ENCODE measurements at regions of chr1 and their contacts with region 1.

Region 1: DNA sequence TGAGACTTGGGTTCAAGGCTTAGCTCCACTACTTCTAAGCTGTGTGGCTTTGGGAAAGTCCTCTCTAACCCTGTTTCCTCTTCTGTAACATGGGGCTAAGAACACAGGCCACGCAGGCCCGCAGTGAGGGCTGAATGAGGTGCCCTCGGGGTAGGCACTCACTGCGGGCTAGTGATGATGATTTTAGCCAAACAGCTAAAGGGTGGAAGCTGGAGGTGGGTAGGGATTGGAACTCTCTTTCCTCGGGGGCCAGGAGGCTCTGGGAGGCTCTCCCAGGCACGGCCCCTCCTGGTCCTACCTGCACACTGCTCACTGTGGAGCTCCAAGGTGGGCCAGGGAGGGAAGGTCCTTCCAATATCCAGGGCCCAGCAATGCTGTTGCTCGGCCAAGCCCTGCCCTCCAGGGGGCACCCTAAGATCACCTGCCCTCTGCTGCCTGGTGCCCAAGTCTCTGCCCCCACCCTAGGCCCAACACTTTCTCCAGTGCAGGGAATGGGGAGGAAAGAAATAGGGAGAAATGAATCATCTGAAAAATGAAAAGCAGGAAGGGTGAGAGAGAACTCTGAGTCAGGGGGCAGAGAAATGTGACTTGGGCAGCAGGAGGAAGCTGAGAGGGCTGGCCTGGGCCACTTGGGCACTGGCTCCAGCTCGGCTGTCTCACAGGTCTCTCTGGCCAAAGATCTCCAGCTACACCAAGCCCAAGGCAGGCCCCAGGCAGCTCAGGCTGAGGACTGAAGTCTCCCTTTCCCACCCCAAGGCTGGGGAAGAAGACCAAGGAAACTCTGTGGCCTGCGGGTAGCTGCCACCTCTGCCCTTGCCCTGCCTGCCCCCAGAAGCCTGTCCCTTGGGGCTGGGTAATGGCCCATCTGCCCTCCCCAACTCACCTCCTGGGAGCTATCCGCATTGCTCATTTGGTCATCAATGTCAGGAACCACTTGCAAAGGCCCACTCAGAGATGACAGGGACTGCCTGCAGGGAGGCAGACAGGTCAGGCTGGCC is 19.3 kb upstream of the EVA1B start:
- DNase-seq: peak; percentile 67
- ATAC-seq: peak; percentile 83
- H3K4me3 Mint-ChIP-seq: no peak overlapping the region
- H3K27ac Mint-ChIP-seq: peak overlapping the region; percentile 50
- H3K4me1 Mint-ChIP-seq: peaks cover 19% of the 10 kb centered on the region
- H3K27me3 Mint-ChIP-seq: no peaks in the 10 kb centered on the region

Region 2: GRCh38 chr1:36269408-36269838 is 73.4 kb before region 1 on chr1:
- CTCF ChIA-PET with region 1: no interaction called
- POLR2A ChIA-PET with region 1: no interaction called
- DNase-seq: no peak
- ATAC-seq: no peak
- H3K4me3 Mint-ChIP-seq: no peak overlapping the region
- H3K27ac Mint-ChIP-seq: no peak overlapping the region
- H3K4me1 Mint-ChIP-seq: peaks cover 2% of the 10 kb centered on the region
- H3K27me3 Mint-ChIP-seq: no peaks in the 10 kb centered on the region

Region 3: GRCh38 chr1:36304521-36304920 is 38.3 kb before region 1 on chr1:
- CTCF ChIA-PET with region 1: no interaction called
- POLR2A ChIA-PET with region 1: no interaction called
- DNase-seq: no peak
- ATAC-seq: no peak
- H3K4me3 Mint-ChIP-seq: no peak overlapping the region
- H3K27ac Mint-ChIP-seq: no peak overlapping the region
- H3K4me1 Mint-ChIP-seq: peaks cover 27% of the 10 kb centered on the region
- H3K27me3 Mint-ChIP-seq: no peaks in the 10 kb centered on the region

Region 4: GRCh38 chr1:36323597-36324352 is 19.0 kb before region 1 on chr1 and contains the start of gene EVA1B:
- CTCF ChIA-PET with region 1: interaction called, 10 read pairs
- POLR2A ChIA-PET with region 1: no interaction called
- DNase-seq: peak; percentile 72
- ATAC-seq: peak; percentile 64
- H3K4me3 Mint-ChIP-seq: peak within 1 kb of the TSS; percentile 77
- H3K27ac Mint-ChIP-seq: peak within 1 kb of the TSS; percentile 74
- H3K4me1 Mint-ChIP-seq: peaks cover 47% of the 10 kb centered on the region
- H3K27me3 Mint-ChIP-seq: peaks cover 16% of the 10 kb centered on the region
- total RNA-seq, gene EVA1B: 12.3 to 13.3 TPM

Region 5: DNA sequence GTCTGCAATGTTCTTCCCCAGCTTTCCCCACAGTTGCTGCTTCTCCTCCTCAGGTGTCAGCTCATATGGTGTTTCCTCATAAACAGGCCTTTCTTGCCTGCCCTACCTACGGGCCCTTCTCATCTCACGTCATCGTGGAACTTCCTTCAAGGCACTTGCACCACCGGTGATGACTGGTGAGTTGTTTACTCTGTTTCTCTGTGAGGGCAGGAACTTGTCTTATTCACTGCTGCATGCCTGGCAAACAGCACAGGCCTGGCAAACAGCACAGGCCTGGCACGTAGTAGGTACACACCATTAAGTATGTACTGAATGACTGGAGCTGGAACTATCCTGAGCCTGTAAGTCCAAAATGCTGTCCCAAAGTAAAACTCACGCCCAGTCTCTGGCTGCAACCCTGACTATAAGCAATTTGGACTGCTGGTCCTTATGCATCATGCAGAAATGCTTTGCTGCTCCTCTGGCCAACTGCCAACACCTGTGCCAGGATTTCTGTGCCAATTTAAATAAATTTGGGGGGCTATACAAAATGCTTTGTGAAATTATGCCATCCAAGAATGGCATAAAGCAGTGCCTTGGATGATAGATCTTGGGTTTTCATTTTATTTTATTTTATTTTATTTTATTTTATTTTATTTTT is 17.3 kb after region 1 on chr1:
- CTCF ChIA-PET with region 1: interaction called, 13 read pairs
- POLR2A ChIA-PET with region 1: interaction called, 3 read pairs
- DNase-seq: no peak
- ATAC-seq: no peak
- H3K4me3 Mint-ChIP-seq: no peak overlapping the region
- H3K27ac Mint-ChIP-seq: peak overlapping the region; percentile 59
- H3K4me1 Mint-ChIP-seq: peaks cover 6% of the 10 kb centered on the region
- H3K27me3 Mint-ChIP-seq: no peaks in the 10 kb centered on the region

Region 6: GRCh38 chr1:36369061-36369861 is 26.5 kb after region 1 on chr1:
- CTCF ChIA-PET with region 1: interaction called, 53 read pairs
- POLR2A ChIA-PET with region 1: interaction called, 3 read pairs
- DNase-seq: peak; percentile 91
- ATAC-seq: peak; percentile 52
- H3K4me3 Mint-ChIP-seq: no peak overlapping the region
- H3K27ac Mint-ChIP-seq: peak overlapping the region; percentile 50
- H3K4me1 Mint-ChIP-seq: peaks cover 73% of the 10 kb centered on the region
- H3K27me3 Mint-ChIP-seq: no peaks in the 10 kb centered on the region

Region 7: DNA sequence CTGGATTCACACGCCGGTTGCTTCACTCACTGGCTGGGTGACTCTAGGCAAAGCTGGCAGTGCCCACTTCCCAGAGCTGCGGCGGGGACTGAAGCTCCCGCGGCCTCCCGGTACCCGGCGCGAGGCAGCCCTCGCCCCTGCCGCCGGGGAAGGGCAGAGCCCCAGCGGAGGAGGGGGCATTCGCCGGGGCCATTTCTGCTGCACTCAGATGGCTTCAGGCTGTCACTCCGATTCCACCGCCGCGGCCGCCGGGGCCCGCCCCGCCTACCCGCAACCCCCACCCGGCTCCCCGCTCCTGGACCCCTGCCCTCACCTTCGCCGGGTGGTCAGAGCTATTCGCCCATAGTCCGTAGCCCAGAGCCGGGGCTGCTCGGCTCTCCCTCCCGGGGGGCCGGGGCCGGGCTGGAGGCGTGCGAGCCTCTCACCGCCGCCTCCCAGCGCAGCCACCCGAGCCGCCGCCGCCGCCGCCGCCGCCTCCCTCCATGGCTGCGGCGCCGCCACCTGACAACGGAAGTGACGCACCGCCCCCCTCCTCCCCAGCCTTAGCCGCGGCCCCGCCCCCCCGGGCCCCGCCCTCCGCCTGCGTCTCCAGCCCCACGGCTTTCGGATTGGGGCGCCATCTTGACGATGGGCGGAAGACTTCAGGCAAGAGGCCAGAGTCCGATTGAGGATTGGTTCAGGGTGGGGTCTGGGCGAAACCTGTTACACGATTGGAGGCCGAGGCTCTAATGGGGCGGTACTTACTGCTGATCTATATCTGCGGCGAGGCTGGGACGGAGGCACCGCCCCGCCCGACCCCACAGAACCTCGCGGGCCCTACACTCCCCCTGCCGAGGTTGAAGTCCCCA is 42.9 kb after region 1 on chr1 and contains the start of gene STK40:
- CTCF ChIA-PET with region 1: interaction called, 14 read pairs
- POLR2A ChIA-PET with region 1: no interaction called
- DNase-seq: peak; percentile 99
- ATAC-seq: peak; percentile 92
- H3K4me3 Mint-ChIP-seq: peak within 1 kb of the TSS; percentile 86
- H3K27ac Mint-ChIP-seq: peak within 1 kb of the TSS; percentile 99
- H3K4me1 Mint-ChIP-seq: peaks cover 54% of the 10 kb centered on the region
- H3K27me3 Mint-ChIP-seq: no peaks in the 10 kb centered on the region
- total RNA-seq, gene STK40: 69.7 to 72.4 TPM

Region 8: GRCh38 chr1:36411674-36412520 is 69.1 kb after region 1 on chr1:
- CTCF ChIA-PET with region 1: interaction called, 40 read pairs
- POLR2A ChIA-PET with region 1: no interaction called
- DNase-seq: peak; percentile 75
- ATAC-seq: peak; percentile 94
- H3K4me3 Mint-ChIP-seq: peak overlapping the region; percentile 25
- H3K27ac Mint-ChIP-seq: peak overlapping the region; percentile 86
- H3K4me1 Mint-ChIP-seq: peaks cover 23% of the 10 kb centered on the region
- H3K27me3 Mint-ChIP-seq: peaks cover 2% of the 10 kb centered on the region

Region 9: GRCh38 chr1:36420836-36421664 is 78.3 kb after region 1 on chr1:
- CTCF ChIA-PET with region 1: interaction called, 40 read pairs
- POLR2A ChIA-PET with region 1: no interaction called
- DNase-seq: peak; percentile 94
- ATAC-seq: peak; percentile 98
- H3K4me3 Mint-ChIP-seq: peak overlapping the region; percentile 53
- H3K27ac Mint-ChIP-seq: peak overlapping the region; percentile 82
- H3K4me1 Mint-ChIP-seq: peaks cover 16% of the 10 kb centered on the region
- H3K27me3 Mint-ChIP-seq: no peaks in the 10 kb centered on the region

Region 10: DNA sequence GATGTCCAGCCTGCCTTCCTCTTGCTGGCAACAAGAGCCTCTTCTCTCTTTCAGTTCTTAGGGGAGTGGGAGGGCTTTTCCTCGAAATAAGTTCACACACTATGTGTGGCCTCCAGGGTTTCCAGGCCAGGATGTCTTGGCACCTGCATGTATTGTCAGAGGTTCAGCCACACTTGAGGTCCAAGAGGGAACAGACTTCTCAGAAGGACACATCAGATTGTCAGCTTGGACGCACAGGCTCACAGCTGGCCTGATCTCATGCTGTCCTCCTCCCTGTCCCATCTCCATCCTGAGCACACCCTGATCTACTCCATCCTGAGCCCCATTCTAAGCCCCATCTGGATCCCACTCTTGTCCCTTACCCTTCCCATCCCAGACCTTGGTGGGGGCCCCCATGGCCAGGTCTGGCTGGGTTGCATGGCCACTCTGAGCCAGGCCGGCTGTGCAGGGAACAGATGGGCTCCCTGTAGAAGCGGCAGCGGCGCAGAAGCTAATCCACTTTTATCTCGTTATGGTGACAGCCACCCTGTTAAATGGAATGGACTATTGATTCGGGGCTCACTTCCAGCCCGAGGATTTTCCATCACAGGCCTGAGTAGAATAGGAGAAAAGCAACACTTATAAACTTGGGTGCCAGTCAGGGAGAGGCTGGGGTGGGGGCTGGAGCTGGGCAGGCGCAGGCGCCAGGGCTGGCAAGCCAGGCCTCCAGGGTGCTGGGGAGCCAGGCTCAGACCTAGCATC is 225.0 kb after region 1 on chr1:
- CTCF ChIA-PET with region 1: no interaction called
- POLR2A ChIA-PET with region 1: no interaction called
- DNase-seq: no peak
- ATAC-seq: no peak
- H3K4me3 Mint-ChIP-seq: no peak overlapping the region
- H3K27ac Mint-ChIP-seq: no peak overlapping the region
- H3K4me1 Mint-ChIP-seq: no peaks in the 10 kb centered on the region
- H3K27me3 Mint-ChIP-seq: peaks cover 2% of the 10 kb centered on the region